Heart left ventricle (tissue), 16 donors: ENCODE measurements at regions of chr16 and their contacts with region 1.

Region 1: DNA sequence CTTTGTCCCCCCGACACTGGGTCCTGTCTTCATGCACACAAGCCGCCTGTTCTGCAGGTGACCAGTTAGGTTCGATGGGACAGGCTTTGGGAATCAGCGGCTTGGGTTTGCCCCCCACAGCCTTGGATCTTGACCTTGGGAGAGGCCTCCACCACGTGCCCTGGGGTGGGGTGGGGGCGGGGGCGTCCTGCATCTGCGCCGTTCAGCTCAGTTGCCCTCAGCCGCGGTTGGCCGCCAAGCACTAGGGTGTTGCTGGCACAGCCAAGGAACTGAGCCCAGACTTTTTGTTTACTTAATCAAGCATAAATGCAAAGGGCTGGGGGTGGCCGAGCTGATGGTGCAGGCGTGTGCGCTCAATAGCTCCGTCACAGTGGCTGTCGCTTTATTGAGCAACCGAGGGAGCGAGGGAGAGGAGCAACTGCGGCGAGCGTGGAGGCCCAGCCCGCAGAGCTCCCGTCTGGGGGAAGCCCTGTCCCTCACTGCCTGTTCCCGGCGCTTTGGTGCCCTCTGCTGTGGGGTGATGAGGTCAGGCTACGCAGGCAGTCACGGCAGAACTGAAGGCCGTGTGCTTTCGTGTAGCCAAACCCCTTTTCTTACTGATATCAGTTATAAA is 33.9 kb downstream of the JPH3 start:
- DNase-seq: peak; percentile 77 to 90 (median 84)
- ATAC-seq: peak; percentile 85 to 97 (median 94)
- H3K4me3 ChIP-seq: peak overlapping the region in 8 of 12 donors; percentile 12 to 41 (median 19)
- H3K27ac ChIP-seq: no peak overlapping the region
- H3K4me1 ChIP-seq: peaks cover 0 to 15% (median 10%) of the 10 kb centered on the region in 12 donors
- H3K27me3 ChIP-seq: peaks cover 0 to 26% (median 3%) of the 10 kb centered on the region in 9 donors
- CTCF ChIP-seq: peak; percentile 41 to 77 (median 68)
- POLR2A ChIP-seq: no peak

Region 2: DNA sequence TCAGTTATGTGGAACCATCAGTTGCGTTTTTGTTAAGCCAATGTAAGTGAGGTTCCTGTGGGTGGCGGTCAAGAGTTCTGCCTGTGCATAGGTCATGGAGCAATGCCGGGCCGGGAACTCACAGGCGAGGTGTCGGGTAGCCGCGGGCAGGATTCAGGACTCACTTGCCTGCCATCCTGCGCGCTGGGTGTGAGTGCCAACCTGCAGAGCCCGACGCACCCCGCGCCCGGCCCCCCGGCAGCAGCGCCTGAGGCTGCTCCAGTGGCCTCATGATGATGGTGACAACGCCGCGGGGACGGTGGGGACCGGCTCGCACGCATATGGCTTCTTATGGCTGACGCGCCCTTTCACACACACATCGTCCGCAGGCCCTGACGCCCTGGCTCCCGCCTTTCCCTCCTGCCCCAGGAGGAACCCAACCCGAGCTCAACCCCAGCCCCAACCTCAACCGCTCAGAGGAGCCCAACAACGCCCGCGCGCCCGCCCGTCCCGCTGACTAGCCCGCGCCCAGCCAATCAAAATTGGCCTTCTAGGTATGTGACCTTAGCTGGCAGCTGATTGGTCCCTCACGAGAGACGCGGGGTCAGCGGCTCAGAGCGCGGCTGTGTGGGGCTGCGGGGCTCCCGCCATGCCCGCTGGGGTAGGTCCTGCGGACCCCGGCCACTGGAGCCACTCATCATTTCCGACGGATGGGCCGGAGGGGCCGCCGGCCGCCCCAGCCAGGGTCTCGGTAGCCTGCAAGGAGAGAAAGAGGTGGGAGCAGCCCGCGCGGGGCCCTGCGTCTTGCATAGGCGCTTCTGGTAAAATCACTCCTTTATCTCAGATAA is 319.0 kb before region 1 on chr16 and contains the start of gene C16orf95:
- intact Hi-C with region 1: loop called in 4 of 10 experiments (anchors 10 kb)
- DNase-seq: peak; percentile 96 to 97 (median 97)
- ATAC-seq: peak; percentile 97 to 99 (median 98)
- H3K4me3 ChIP-seq: peak within 1 kb of the TSS; percentile 67 to 100 (median 85)
- H3K27ac ChIP-seq: peak within 1 kb of the TSS; percentile 79 to 97 (median 91)
- H3K4me1 ChIP-seq: peaks cover 0 to 15% (median 8%) of the 10 kb centered on the region in 12 donors
- H3K27me3 ChIP-seq: no peaks in the 10 kb centered on the region
- CTCF ChIP-seq: peak; percentile 37 to 77 (median 64)
- POLR2A ChIP-seq: peak; percentile 32 to 91
- total RNA-seq, gene C16orf95: 0.91 to 4.5 (median 3.3) TPM

Region 3: GRCh38 chr16:87387942-87388817 is 248.0 kb before region 1 on chr16:
- intact Hi-C with region 1: loop called in 4 of 10 experiments (anchors 2 to 10 kb)
- DNase-seq: peak; percentile 90 to 96 (median 96)
- ATAC-seq: peak; percentile 71 to 88 (median 82)
- H3K4me3 ChIP-seq: peak overlapping the region in 9 of 12 donors; percentile 22 to 42 (median 29)
- H3K27ac ChIP-seq: peak overlapping the region; percentile 80 to 96 (median 90)
- H3K4me1 ChIP-seq: peaks cover 6 to 45% (median 29%) of the 10 kb centered on the region in 12 donors
- H3K27me3 ChIP-seq: no peaks in the 10 kb centered on the region
- CTCF ChIP-seq: no peak
- POLR2A ChIP-seq: peak in 1 of 2 donors; percentile 66

Region 4: GRCh38 chr16:87416826-87417527 is 219.2 kb before region 1 on chr16:
- intact Hi-C with region 1: loop called in 8 of 10 experiments (anchors 5 to 10 kb)
- DNase-seq: no peak
- ATAC-seq: no peak
- H3K4me3 ChIP-seq: no peak overlapping the region
- H3K27ac ChIP-seq: no peak overlapping the region
- H3K4me1 ChIP-seq: peaks cover 0 to 6% (median 0%) of the 10 kb centered on the region in 12 donors
- H3K27me3 ChIP-seq: no peaks in the 10 kb centered on the region
- CTCF ChIP-seq: peak; percentile 49 to 79 (median 66)
- POLR2A ChIP-seq: no peak

Region 5: GRCh38 chr16:87584271-87584670 is 51.9 kb before region 1 on chr16:
- intact Hi-C with region 1: loop called in 7 of 10 experiments (anchors 1 to 5 kb)
- DNase-seq: no peak
- ATAC-seq: no peak
- H3K4me3 ChIP-seq: no peak overlapping the region
- H3K27ac ChIP-seq: no peak overlapping the region
- H3K4me1 ChIP-seq: peaks cover 0 to 32% (median 18%) of the 10 kb centered on the region in 12 donors
- H3K27me3 ChIP-seq: peaks cover 0 to 42% (median 9%) of the 10 kb centered on the region in 9 donors
- CTCF ChIP-seq: no peak
- POLR2A ChIP-seq: no peak